Cardiac septum (tissue), 1 donor: ENCODE measurements at regions of chr16 and their contacts with region 1.

Region 1: DNA sequence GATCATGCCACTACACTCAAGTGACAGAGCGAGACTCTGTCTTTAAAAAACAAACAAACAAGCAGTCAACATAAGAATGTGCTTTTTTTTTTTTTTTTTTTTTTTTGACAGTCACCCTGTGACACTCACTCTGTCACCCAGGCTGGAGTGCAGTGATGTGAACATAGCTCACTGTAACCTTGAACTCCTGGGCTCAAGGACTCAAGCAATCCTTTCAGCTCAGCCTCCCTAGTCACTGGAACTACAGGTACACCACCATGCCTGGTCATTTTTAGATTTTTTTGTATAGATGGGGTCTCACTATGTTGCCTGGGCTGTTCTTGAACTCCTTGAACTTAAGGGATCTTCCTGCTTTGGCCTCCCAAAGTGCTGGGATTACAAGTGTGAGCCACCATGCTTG is 15.3 kb upstream of the CHP2 start:
- DNase-seq: no peak

Region 2: GRCh38 chr16:23640931-23641765 is 98.4 kb before region 1 on chr16 and contains the starts of genes DCTN5 and PALB2:
- intact Hi-C with region 1: no loop called
- DNase-seq: peak; percentile 97
- total RNA-seq, gene DCTN5: 38.4 TPM
- total RNA-seq, gene PALB2: 4.6 TPM

Region 3: GRCh38 chr16:23784811-23785447 is 45.4 kb after region 1 on chr16:
- intact Hi-C with region 1: no loop called
- DNase-seq: no peak

Region 4: DNA sequence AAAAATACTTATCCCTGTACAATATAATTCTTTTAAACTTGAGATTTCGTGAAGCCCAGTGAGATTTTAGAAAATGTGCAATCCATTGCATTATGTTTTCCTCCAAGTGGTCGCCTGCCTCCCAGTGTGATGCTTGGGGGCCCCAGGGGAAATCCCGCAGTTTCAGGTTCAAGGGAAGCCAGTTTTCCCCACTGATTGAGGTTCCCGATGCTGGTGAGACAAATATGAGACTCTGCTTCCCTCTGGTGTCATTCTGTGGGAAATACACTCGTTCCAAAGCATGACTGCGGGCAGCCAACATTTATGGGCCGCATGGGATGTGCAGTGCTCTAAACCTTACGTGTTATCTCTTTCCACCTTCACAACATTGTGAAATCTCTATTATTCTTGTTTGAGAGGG is 297.1 kb after region 1 on chr16:
- intact Hi-C with region 1: loop called (anchors 5 kb)
- DNase-seq: no peak